A673 (cell line): ENCODE measurements at regions of chrX and their contacts with region 1.

Region 1: DNA sequence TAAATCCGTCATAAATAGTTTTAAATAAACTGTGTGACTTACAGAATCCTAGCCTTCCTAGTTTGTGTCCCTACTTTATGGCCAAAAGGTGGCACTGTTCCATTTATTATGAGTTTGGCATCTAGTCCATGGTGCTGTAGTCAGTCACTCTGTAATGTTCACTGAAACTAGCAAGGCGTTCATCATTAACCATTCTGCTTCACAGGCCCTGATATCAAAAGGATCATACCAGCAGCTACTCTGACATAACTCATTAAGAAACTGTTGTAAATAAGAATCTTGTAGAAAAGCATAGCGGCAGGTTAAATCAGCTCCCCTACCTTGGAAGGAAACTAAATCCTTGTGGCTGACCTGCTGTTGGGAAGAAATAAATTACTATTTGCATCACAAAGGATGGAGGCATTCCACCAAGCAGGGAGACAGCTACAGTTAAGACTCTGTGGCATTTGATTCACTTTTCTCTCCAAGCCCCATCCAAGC is 919.6 kb upstream of the DIAPH2 start:
- DNase-seq: peak; percentile 74
- H3K4me3 ChIP-seq: no peak overlapping the region
- H3K27ac ChIP-seq: no peak overlapping the region
- H3K4me1 ChIP-seq: no peaks in the 10 kb centered on the region
- H3K27me3 ChIP-seq: no peaks in the 10 kb centered on the region
- CTCF ChIP-seq: peak; percentile 74

Region 2: DNA sequence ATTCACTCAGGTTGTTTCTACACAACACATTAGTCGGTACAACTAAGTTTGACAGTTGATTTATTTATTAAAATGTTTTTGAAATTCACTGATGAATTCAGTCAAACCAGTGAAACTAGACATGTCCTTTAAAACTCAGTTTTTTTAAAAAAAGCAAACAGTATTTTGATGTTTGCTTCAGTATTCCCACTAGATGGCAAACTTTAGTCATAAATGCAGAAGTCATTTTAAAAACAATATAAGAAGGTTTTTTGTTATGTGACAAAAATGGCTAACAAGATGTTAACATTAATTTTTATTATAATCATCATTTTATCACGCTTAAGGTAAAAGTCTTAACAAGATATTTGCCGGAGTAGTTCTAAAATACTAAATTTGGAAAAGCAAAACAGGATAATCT is 418.2 kb before region 1 on chrX:
- CTCF ChIA-PET with region 1: no interaction called
- POLR2A ChIA-PET with region 1: no interaction called
- intact Hi-C with region 1: loop called (anchors 2 kb)
- DNase-seq: peak; percentile 39
- H3K4me3 ChIP-seq: no peak overlapping the region
- H3K27ac ChIP-seq: no peak overlapping the region
- H3K4me1 ChIP-seq: no peaks in the 10 kb centered on the region
- H3K27me3 ChIP-seq: no peaks in the 10 kb centered on the region
- CTCF ChIP-seq: peak; percentile 54; the same call in 1 of the 2 replicates

Region 3: DNA sequence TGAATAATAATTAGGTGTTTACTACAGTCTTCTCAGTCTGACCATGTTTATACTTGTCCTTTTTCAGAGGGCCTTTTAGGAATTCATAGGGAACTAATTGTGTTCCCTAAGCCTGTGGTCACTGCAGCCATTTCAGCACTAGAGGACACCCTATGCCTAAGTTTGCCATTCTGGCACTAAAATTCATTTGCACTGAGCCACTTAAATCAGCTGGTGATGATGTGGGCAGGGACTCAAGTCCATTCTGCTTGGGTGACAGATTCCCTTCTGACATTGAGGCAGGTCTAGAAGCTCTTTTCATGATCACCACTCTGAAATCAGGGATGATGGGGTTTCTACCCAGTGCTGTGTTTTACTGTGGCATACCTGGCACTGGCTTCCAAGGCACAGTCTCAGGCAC is 259.3 kb before region 1 on chrX:
- CTCF ChIA-PET with region 1: no interaction called
- POLR2A ChIA-PET with region 1: no interaction called
- intact Hi-C with region 1: loop called (anchors 2 kb)
- DNase-seq: peak; percentile 37
- H3K4me3 ChIP-seq: no peak overlapping the region
- H3K27ac ChIP-seq: no peak overlapping the region
- H3K4me1 ChIP-seq: no peaks in the 10 kb centered on the region
- H3K27me3 ChIP-seq: no peaks in the 10 kb centered on the region
- CTCF ChIP-seq: peak; percentile 53

Region 4: GRCh38 chrX:95675794-95676193 is 89.2 kb before region 1 on chrX:
- CTCF ChIA-PET with region 1: no interaction called
- POLR2A ChIA-PET with region 1: no interaction called
- intact Hi-C with region 1: no loop called
- DNase-seq: no peak
- H3K4me3 ChIP-seq: no peak overlapping the region
- H3K27ac ChIP-seq: no peak overlapping the region
- H3K4me1 ChIP-seq: no peaks in the 10 kb centered on the region
- H3K27me3 ChIP-seq: no peaks in the 10 kb centered on the region
- CTCF ChIP-seq: no peak

Region 5: DNA sequence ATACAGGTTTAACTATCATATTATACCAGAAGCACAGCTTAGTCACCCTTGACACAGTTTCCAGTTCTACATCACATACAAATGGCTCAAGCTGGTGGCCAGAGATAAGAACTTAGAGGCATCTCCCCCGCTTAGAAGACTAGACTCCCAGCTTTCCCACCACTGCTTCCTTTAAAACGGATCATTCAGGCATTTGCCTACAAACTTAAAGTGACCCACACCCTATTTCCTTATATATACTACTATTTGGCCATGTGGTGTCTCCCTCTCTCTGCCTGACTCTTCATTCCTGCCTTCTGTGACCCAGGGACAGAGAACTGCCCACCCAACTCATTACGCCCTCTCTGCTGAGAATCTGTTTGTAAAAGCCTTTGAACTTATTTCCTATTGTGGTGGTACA is 138.5 kb after region 1 on chrX:
- CTCF ChIA-PET with region 1: no interaction called
- POLR2A ChIA-PET with region 1: no interaction called
- intact Hi-C with region 1: loop called (anchors 10 kb)
- DNase-seq: peak; percentile 14
- H3K4me3 ChIP-seq: no peak overlapping the region
- H3K27ac ChIP-seq: no peak overlapping the region
- H3K4me1 ChIP-seq: no peaks in the 10 kb centered on the region
- H3K27me3 ChIP-seq: no peaks in the 10 kb centered on the region
- CTCF ChIP-seq: 0 out of 2 replicates have a peak, but pooled peaks have one; percentile 16

Region 6: GRCh38 chrX:96182366-96182765 is 417.4 kb after region 1 on chrX:
- CTCF ChIA-PET with region 1: interaction called, 7 read pairs
- POLR2A ChIA-PET with region 1: no interaction called
- intact Hi-C with region 1: loop called (anchors 1 kb)
- DNase-seq: peak; percentile 70
- H3K4me3 ChIP-seq: no peak overlapping the region
- H3K27ac ChIP-seq: no peak overlapping the region
- H3K4me1 ChIP-seq: peaks cover 10% of the 10 kb centered on the region
- H3K27me3 ChIP-seq: no peaks in the 10 kb centered on the region
- CTCF ChIP-seq: peak; percentile 78